Activated naive CD4-positive, alpha-beta T cell treated with anti-CD3 and anti-CD28 coated beads, Interleukin-2, amount 10 ng/mL, durations not matched to agents 7 days and 5 days (primary cell): ENCODE measurements at regions of chr13 and their contacts with region 1.

Region 1: DNA sequence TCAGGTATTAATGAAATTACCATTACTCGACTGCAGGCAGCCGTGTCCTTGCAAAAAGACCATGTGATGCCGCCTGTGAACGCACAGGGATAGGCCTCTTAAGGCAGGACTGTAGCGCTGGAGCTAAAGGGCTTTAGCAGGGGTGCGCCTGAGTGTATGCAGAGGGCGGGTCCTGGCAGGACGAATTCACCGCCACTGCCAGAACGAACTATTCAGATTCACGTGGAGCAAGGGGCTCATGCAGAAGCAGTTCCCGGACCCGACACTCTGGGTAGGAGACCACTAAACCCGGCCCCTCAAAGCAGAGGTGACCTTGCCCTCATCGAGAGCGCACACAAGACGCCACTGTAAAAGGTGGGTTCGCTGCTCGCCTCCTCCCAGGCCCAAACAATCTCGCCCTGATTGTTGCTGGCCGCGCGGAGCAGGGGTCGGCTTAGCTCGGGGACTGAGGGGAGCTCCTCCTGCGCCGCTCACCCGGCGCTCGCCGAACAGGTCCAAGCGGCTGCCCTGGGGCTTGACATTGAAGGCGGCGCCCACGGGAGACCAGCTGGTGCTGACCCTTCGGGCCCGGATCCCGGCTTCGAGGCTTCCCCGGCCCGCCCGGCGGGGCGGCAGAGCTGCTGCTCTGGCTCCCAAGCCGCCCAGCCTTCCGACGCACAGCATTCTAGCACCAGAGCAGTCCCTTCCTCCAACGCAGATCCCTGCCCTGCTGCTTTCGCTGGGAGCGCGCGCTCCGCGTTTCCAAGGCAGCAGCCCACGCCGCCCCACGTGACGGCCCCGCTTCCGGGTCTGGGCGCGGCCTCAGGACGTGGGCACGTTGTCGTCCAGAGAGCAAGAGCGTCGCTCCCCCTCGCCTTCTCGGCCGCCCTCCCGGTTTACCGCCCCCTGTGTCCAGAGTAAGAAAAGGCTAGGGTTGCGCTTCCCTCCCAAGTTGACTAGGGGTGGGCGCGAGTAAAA is at the start of gene MIPEP:
- DNase-seq: peak; percentile 92
- H3K4me3 Mint-ChIP-seq: peak within 1 kb of the TSS; percentile 86
- H3K27ac Mint-ChIP-seq: peak within 1 kb of the TSS; percentile 77
- H3K4me1 Mint-ChIP-seq: peaks cover 26% of the 10 kb centered on the region
- H3K27me3 Mint-ChIP-seq: peaks cover 5% of the 10 kb centered on the region

Region 2: DNA sequence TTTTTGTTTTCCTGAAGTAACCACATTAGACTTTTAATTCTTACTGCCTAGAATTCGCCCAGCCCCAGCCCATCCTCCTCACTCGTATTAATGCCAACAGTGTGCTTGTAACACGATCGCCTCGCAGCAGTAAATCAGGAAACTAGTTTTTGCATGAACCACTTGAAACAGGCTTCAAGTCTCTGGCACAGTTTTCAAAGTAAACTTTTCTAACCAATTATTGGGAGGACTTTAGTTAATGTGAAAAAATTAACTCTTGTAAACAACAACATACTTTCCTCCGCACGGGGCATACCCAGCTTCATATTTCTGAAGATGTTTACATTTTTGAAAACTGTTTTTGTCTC is 279.5 kb before region 1 on chr13:
- CTCF ChIA-PET with region 1: no interaction called
- DNase-seq: no peak
- H3K4me3 Mint-ChIP-seq: peak overlapping the region; percentile 3
- H3K27ac Mint-ChIP-seq: no peak overlapping the region
- H3K4me1 Mint-ChIP-seq: peaks cover 18% of the 10 kb centered on the region
- H3K27me3 Mint-ChIP-seq: peaks cover 26% of the 10 kb centered on the region

Region 3: DNA sequence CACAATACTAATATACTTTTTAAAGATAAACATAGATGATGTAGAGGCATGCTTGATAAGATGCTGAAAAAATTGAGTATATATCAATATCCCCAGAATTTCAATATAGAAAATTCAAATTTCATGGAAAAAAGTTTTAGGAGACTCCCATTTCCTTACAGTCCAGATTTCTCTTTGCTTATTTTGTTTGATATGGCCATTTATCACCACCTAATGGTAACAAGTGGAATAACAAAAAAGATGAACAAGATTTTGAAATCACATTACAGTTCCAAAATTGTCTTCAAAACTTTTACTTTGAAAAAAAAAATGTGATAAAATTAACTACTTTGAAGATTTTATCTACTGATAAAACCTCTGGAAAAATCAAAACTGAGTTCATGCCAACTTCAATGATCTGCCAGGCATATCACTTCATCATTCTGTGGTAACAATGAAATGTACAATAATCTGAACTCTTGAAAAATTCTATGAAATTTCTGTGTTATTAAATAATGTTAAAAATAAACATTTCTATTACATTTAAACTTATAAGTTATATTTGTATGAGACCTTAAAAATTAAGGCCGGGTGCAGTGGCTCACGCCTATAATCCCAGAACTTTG is 17.2 kb before region 1 on chr13:
- CTCF ChIA-PET with region 1: interaction called, 10 read pairs
- DNase-seq: no peak
- H3K4me3 Mint-ChIP-seq: no peak overlapping the region
- H3K27ac Mint-ChIP-seq: no peak overlapping the region
- H3K4me1 Mint-ChIP-seq: no peaks in the 10 kb centered on the region
- H3K27me3 Mint-ChIP-seq: no peaks in the 10 kb centered on the region